PC-9 (cell line): ENCODE measurements at regions of chr10 and their contacts with region 1.

Region 1: DNA sequence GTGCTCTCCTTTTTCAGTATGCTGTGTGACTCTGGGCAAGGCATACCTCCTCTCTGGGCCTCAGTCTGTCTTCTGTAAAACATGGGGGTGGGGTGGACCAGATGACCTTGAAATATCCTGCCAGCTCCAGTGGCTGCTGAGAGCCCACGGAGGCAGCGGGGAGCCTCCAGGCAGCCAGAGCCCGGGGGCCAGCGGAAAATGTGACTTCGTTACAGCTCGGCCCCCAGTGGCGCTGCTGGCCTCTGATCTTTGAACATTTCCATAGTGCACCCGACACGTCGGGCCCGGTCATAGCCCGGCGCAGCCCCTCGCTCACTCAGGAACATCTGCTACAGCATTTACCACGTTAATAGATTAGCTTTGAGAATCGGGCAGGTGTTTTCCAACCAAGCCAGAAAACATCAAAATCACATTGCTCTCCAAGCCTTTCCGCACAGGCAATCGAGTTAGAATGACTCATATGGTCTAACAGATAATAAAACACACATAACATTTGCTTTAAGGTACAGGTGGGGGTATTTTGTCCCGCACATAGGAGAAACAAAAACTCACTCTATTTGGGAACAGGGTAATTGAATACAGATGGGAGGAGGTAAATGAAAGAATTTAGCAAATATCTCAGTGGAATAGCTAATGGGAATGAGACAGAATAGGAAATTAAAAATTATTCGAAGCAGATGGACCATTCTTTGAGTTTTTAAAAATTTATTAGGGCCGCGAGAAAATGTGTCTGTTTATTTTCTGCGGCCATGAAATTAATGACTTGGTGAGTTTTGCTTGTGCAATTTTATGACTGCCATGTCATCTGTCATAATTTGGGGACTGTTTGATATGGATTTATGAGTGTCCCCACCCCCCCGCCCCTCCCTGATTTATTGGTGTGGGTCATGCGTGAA is 26.3 kb upstream of the COMTD1 start:
- DNase-seq: peak in 1 of 2 experiments; percentile 69
- H3K4me3 ChIP-seq: no peak overlapping the region
- H3K27ac ChIP-seq: peak overlapping the region; percentile 96
- H3K4me1 ChIP-seq: peaks cover 57% of the 10 kb centered on the region
- H3K27me3 ChIP-seq: no peaks in the 10 kb centered on the region
- CTCF ChIP-seq: no peak

Region 2: DNA sequence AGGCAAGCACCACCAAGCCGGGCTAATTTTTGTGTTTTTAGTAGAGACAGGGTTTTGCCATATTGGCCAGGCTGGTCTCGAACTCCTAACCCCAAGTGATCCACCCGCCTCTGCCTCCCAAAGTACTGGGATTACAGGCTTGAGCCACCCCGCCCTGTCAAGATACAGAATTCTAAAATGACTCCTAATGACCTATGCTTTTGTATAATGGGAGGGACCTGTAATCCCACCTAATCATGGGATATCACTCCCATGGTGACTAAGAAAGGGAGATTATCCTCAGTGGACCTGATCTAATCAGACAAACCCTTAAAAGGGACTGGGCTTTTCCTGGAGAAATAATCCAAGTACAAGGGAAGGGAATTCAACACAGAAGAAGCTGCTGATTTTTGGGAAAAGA is 121.8 kb before region 1 on chr10:
- CTCF ChIA-PET with region 1: interaction called, 18 read pairs
- POLR2A ChIA-PET with region 1: no interaction called
- intact Hi-C with region 1: no loop called
- DNase-seq: no peak
- H3K4me3 ChIP-seq: no peak overlapping the region
- H3K27ac ChIP-seq: no peak overlapping the region
- H3K4me1 ChIP-seq: peaks cover 57% of the 10 kb centered on the region
- H3K27me3 ChIP-seq: no peaks in the 10 kb centered on the region
- CTCF ChIP-seq: no peak

Region 3: GRCh38 chr10:75250910-75251309 is 11.2 kb before region 1 on chr10:
- CTCF ChIA-PET with region 1: no interaction called
- POLR2A ChIA-PET with region 1: no interaction called
- intact Hi-C with region 1: loop called (anchors 1 kb)
- DNase-seq: peak; percentile 95 to 96
- H3K4me3 ChIP-seq: no peak overlapping the region
- H3K27ac ChIP-seq: peak overlapping the region; percentile 93
- H3K4me1 ChIP-seq: peaks cover 63% of the 10 kb centered on the region
- H3K27me3 ChIP-seq: no peaks in the 10 kb centered on the region
- CTCF ChIP-seq: no peak

Region 4: GRCh38 chr10:75303045-75303781 is 41.2 kb after region 1 on chr10:
- CTCF ChIA-PET with region 1: no interaction called
- POLR2A ChIA-PET with region 1: no interaction called
- intact Hi-C with region 1: no loop called
- DNase-seq: no peak
- H3K4me3 ChIP-seq: no peak overlapping the region
- H3K27ac ChIP-seq: no peak overlapping the region
- H3K4me1 ChIP-seq: peaks cover 3% of the 10 kb centered on the region; the same call in 1 of the 2 replicates
- H3K27me3 ChIP-seq: no peaks in the 10 kb centered on the region
- CTCF ChIP-seq: no peak